Psoas muscle (tissue), 8 donors: ENCODE measurements at regions of chr4 and their contacts with region 1.

Region 1: GRCh38 chr4:71241501-71242288 is 97.1 kb upstream of the SLC4A4 start:
- DNase-seq: no peak
- ATAC-seq: peak; percentile 84 to 96 (median 92)
- H3K4me3 ChIP-seq: peak overlapping the region; percentile 51
- H3K27ac ChIP-seq: peak overlapping the region; percentile 83
- H3K4me1 ChIP-seq: peaks cover 17% of the 10 kb centered on the region
- H3K27me3 ChIP-seq: no peaks in the 10 kb centered on the region
- CTCF ChIP-seq: no peak

Region 2: GRCh38 chr4:71287305-71287704 is 45.6 kb after region 1 on chr4:
- intact Hi-C with region 1: loop called in 1 of 2 experiments (anchors 5 kb)
- DNase-seq: no peak
- ATAC-seq: no peak
- H3K4me3 ChIP-seq: no peak overlapping the region
- H3K27ac ChIP-seq: no peak overlapping the region
- H3K4me1 ChIP-seq: peaks cover 46% of the 10 kb centered on the region
- H3K27me3 ChIP-seq: no peaks in the 10 kb centered on the region
- CTCF ChIP-seq: no peak